Posterior vena cava (tissue), 2 donors: ENCODE measurements at regions of chr10 and their contacts with region 1.

Region 1: GRCh38 chr10:66472156-66472555 is 453.7 kb upstream of the LRRTM3 start:
- DNase-seq: no peak

Region 2: GRCh38 chr10:65950075-65950474 is 522.1 kb before region 1 on chr10:
- intact Hi-C with region 1: loop called in 1 of 2 experiments (anchors 5 kb)
- DNase-seq: no peak